ENCODE measurements at regions of chr9 and their contacts with region 1.

Region 1: DNA sequence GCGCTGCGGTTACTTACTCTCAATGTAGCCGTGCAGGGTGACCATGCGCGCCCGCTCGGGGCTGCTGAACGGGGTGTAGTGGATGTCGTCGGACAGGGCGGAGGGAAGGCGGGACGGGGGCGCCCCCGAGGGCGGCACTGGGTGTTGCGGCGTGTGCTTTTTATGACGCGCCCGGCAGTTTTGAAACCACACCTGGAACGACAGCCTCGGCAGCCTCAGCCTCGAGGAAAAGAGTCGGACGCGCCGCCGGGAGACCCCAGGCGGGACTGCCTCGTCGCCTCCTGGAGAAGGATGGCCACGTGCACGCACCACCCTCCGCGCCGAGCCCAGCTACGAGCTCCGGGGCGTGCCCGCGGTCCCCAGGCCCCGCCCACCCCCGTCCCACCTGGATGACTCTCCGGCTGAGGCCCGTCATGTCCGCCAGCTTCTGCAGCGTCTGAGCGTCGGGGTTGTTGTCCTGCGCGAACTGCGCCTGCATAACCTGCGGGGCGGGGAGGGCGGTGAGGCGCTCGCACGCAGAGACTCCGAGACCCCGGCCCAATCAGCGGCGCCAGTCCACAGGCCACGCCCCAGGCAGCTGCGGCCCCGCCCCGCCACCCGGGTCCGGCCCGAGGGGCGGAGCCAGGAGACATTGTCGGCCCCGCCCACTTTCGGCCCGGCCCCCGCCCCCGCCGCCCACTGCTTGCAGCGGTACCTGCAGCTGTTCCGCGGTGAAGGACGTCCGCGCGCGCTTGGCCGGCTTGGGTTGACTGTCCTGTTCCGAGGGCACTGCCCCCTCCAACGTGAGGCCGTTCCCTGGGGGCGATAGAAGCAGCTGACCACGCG is 15.0 kb downstream of the LHX6 start:
- DNase-seq: peak; percentile 80
- ATAC-seq: peak; percentile 92
- H3K4me3 Mint-ChIP-seq: peak overlapping the region; percentile 36
- H3K27ac Mint-ChIP-seq: no peak overlapping the region
- H3K4me1 Mint-ChIP-seq: peaks cover 10% of the 10 kb centered on the region
- H3K27me3 Mint-ChIP-seq: peaks cover 63% of the 10 kb centered on the region

Region 2: DNA sequence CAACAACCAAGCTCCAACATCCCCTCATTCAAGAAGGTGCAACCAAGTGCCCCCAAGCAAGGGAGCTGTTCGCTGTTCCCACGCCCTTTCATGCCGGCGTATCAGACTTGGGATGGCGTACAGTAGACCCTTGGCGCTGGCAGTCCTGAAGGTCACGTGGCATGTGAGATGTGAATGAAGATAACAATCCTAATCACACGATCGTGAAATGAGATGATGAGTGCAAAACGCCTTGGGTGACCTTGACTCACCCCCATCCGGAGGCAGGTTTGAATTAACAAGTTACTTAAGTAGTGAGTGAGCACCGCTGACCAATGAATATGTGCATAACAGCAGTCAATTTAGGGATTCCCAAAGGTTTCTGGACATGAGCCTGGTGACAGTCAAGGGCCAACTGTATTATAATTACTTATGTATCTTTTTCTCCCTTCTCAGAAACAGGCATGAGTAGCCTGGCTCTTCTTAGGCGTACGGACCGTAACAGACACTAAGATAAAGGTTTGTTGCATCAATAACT is 270.9 kb before region 1 on chr9:
- CTCF ChIA-PET with region 1: no interaction called
- POLR2A ChIA-PET with region 1: interaction called, 10 read pairs
- intact Hi-C with region 1: no loop called
- DNase-seq: no peak
- ATAC-seq: no peak
- H3K4me3 Mint-ChIP-seq: no peak overlapping the region
- H3K27ac Mint-ChIP-seq: no peak overlapping the region
- H3K4me1 Mint-ChIP-seq: no peaks in the 10 kb centered on the region
- H3K27me3 Mint-ChIP-seq: no peaks in the 10 kb centered on the region

Region 3: GRCh38 chr9:122159026-122159924 is 54.5 kb before region 1 on chr9 and contains the starts of genes MORN5 and NDUFA8:
- CTCF ChIA-PET with region 1: no interaction called
- POLR2A ChIA-PET with region 1: no interaction called
- intact Hi-C with region 1: loop called in 1 of 2 experiments (anchors 1 kb)
- DNase-seq: peak; percentile 98
- ATAC-seq: peak; percentile 97
- H3K4me3 Mint-ChIP-seq: peak within 1 kb of the TSS; percentile 95
- H3K27ac Mint-ChIP-seq: peak within 1 kb of the TSS; percentile 96
- H3K4me1 Mint-ChIP-seq: peaks cover 33% of the 10 kb centered on the region
- H3K27me3 Mint-ChIP-seq: peaks cover 13% of the 10 kb centered on the region
- total RNA-seq, gene MORN5: not detected
- total RNA-seq, gene NDUFA8: 50.4 to 57.2 TPM

Region 4: GRCh38 chr9:122264360-122265148 is 50.8 kb after region 1 on chr9 and contains the starts of genes MRRF and RBM18:
- CTCF ChIA-PET with region 1: no interaction called
- POLR2A ChIA-PET with region 1: no interaction called
- intact Hi-C with region 1: loop called in 1 of 2 experiments (anchors 1 kb)
- DNase-seq: peak; percentile 93
- ATAC-seq: peak; percentile 83
- H3K4me3 Mint-ChIP-seq: peak within 1 kb of the TSS; percentile 98
- H3K27ac Mint-ChIP-seq: peak within 1 kb of the TSS; percentile 99
- H3K4me1 Mint-ChIP-seq: peaks cover 44% of the 10 kb centered on the region
- H3K27me3 Mint-ChIP-seq: no peaks in the 10 kb centered on the region
- total RNA-seq, gene MRRF: 57.3 to 61.5 TPM
- total RNA-seq, gene RBM18: 22.3 to 28.6 TPM

Measured in activated CD4-positive, alpha-beta T cell treated with anti-CD3 and anti-CD28 coated beads for 36 hours (primary cell).